H1 (cell line): ENCODE measurements at regions of chr2 and their contacts with region 1.

Region 1: GRCh38 chr2:102473020-102473419 is at the start of gene SLC9A4:
- DNase-seq: peak in 1 of 2 experiments; percentile 70
- H3K4me3 ChIP-seq: no peak within 1 kb of the TSS
- H3K27ac ChIP-seq: no peak within 1 kb of the TSS
- H3K4me1 ChIP-seq: no peaks in the 10 kb centered on the region
- H3K27me3 ChIP-seq: no peaks in the 10 kb centered on the region
- CTCF ChIP-seq: peak; percentile 8 to 76 (median 57)
- EP300 ChIP-seq: no peak
- POLR2A ChIP-seq: no peak
- RAD21 ChIP-seq: peak; percentile 69 to 73
- total RNA-seq, gene SLC9A4: not detected in 2 replicates

Region 2: GRCh38 chr2:102376052-102376591 is 96.9 kb before region 1 on chr2:
- CTCF ChIA-PET with region 1: no interaction called
- POLR2A ChIA-PET with region 1: no interaction called
- DNase-seq: no peak
- H3K4me3 ChIP-seq: no peak overlapping the region
- H3K27ac ChIP-seq: no peak overlapping the region
- H3K4me1 ChIP-seq: no peaks in the 10 kb centered on the region
- H3K27me3 ChIP-seq: no peaks in the 10 kb centered on the region
- CTCF ChIP-seq: no peak
- EP300 ChIP-seq: no peak
- POLR2A ChIP-seq: no peak
- RAD21 ChIP-seq: no peak

Region 3: DNA sequence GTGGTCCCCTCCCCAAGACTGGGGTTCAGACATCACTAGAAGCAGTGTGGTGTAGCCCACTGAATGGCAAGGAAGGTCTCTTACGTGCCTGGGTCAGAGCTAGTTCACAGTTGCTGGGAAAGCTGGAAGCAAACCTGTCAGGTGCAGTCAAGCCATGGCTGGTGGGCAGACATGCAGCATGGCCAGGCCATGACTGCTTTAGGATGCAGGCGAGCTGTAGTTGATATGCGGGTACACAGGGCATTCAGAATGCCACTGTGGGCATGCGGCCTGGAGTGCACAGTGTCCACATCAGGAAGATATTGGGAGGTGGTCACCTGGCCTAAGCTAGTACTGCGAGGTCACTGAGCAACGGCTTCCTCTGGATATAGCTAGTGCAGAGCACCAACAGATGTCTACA is 11.8 kb before region 1 on chr2:
- CTCF ChIA-PET with region 1: interaction called, 23 read pairs
- POLR2A ChIA-PET with region 1: no interaction called
- DNase-seq: no peak
- H3K4me3 ChIP-seq: no peak overlapping the region
- H3K27ac ChIP-seq: no peak overlapping the region
- H3K4me1 ChIP-seq: no peaks in the 10 kb centered on the region
- H3K27me3 ChIP-seq: no peaks in the 10 kb centered on the region
- CTCF ChIP-seq: no peak
- EP300 ChIP-seq: no peak
- POLR2A ChIP-seq: no peak
- RAD21 ChIP-seq: no peak

Region 4: GRCh38 chr2:102498414-102498813 is 25.4 kb after region 1 on chr2:
- CTCF ChIA-PET with region 1: interaction called, 13 read pairs
- POLR2A ChIA-PET with region 1: no interaction called
- DNase-seq: no peak
- H3K4me3 ChIP-seq: no peak overlapping the region
- H3K27ac ChIP-seq: no peak overlapping the region
- H3K4me1 ChIP-seq: no peaks in the 10 kb centered on the region
- H3K27me3 ChIP-seq: no peaks in the 10 kb centered on the region
- CTCF ChIP-seq: no peak
- EP300 ChIP-seq: no peak
- POLR2A ChIP-seq: no peak
- RAD21 ChIP-seq: no peak

Region 5: GRCh38 chr2:102592597-102592996 is 119.6 kb after region 1 on chr2:
- CTCF ChIA-PET with region 1: interaction called, 29 read pairs
- POLR2A ChIA-PET with region 1: no interaction called
- DNase-seq: peak in 1 of 2 experiments; percentile 57
- H3K4me3 ChIP-seq: no peak overlapping the region
- H3K27ac ChIP-seq: no peak overlapping the region
- H3K4me1 ChIP-seq: no peaks in the 10 kb centered on the region
- H3K27me3 ChIP-seq: no peaks in the 10 kb centered on the region
- CTCF ChIP-seq: peak in 2 of 3 experiments; percentile 57 to 71; a peak in 2 of 4 replicates
- EP300 ChIP-seq: no peak
- POLR2A ChIP-seq: no peak
- RAD21 ChIP-seq: peak; percentile 81 to 83

Region 6: GRCh38 chr2:102703748-102704147 is 230.7 kb after region 1 on chr2:
- CTCF ChIA-PET with region 1: interaction called, 11 read pairs
- POLR2A ChIA-PET with region 1: no interaction called
- DNase-seq: no peak
- H3K4me3 ChIP-seq: no peak overlapping the region
- H3K27ac ChIP-seq: no peak overlapping the region
- H3K4me1 ChIP-seq: peaks cover 0 to 2% (median under 1%) of the 10 kb centered on the region in 4 experiments; a peak in 2 of 7 replicates
- H3K27me3 ChIP-seq: no peaks in the 10 kb centered on the region
- CTCF ChIP-seq: peak in 2 of 3 experiments; percentile 51 to 58; a peak in 3 of 4 replicates
- EP300 ChIP-seq: no peak
- POLR2A ChIP-seq: no peak
- RAD21 ChIP-seq: peak; percentile 70 to 75